Activated naive CD8-positive, alpha-beta T cell treated with anti-CD3 and anti-CD28 coated beads, Interleukin-2, amount 10 ng/mL, durations not matched to agents 7 days and 5 days (primary cell): ENCODE measurements at regions of chr1 and their contacts with region 1.

Region 1: DNA sequence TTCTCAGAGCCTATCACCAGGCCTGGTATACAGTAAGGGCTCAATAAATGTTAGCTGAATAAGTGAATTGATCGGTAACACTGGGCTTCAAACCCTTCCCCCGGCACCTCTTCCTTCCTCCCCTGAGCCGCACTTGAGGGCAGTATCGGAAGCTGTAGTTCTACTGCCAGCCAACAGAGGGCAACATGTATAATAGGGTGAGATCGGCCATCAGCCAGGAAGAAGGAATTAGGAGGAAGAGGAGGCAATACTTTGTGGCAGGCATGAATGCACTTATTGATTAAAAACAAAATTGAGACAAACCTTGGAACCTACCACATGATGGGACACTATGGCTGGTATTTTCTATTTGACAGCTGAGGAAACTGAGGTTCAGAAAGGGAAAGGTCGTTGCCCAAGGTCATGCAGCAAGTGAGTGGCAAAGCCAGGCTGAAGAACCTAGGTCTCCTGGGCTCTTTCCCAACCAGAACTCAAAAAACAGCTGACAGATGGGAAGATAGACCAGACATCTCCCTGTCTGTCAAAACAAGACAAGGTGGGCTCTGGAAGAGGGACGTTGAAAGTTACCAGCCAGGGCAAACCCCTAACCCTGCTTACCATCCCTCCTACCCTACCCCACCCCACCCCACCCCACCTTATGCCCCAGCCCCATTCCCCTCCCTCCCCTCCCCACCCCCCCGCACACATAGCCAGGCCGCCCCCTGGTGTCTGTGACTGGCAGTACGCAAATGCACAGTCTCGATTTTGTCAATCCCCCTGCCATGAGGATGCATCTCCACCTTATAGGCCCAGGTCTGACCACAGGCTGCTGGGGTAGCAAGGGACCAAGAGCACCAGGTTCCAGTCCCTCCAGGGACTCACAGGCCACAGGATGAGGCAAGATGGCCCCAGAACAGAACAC is 107.3 kb upstream of the RUNX3 start:
- DNase-seq: peak; percentile 78
- ATAC-seq: no peak
- H3K4me3 Mint-ChIP-seq: peak overlapping the region; percentile 22
- H3K27ac Mint-ChIP-seq: peak overlapping the region; percentile 57
- H3K4me1 Mint-ChIP-seq: peaks cover 48% of the 10 kb centered on the region
- H3K27me3 Mint-ChIP-seq: no peaks in the 10 kb centered on the region

Region 2: DNA sequence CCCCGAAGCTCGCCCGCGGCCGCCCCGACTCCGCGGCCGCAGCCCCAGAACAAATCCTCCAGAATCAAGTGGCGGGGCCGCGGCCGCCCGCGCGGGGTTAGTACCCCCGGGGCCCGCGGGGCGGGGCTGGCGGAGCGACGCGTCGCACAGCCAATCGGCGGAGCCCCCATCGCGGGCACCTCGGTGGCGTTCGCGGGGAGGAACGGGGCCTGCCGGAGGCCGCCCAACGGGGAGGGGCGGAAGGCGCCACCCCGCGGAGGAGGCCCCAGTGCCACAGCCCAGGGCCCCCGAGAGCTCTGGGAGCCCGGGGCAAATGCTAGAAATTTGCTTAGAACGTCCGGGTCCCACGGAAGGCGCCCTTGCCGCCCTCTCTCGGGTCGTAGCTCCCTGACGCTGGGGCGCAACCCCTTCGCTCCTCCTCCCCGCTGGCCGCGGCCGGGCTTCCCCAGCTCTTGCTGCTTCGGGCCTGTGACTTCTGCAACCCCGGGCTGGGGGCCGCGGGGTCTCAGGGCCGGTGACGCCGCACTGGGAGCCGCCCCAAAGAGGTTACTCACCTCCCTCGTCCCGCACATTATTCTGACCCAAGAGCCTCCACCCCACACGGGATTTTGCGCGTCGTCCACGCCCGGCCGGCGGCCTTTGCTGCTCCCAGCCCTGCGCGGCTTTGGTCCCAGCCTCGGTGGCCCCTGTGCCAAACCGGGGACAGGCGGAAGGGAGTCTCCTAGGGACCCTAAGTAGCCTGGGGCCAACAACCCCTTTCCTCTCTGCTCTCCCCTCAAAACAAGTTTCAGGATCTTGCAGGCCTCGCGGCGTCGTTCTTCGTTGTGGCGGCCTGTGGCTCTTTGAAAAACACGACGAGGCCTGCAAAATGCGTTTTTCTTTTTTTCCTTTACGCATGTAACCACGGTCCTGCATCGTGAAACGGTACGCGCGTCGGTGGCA is 106.9 kb before region 1 on chr1 and contains the start of gene RUNX3:
- POLR2A ChIA-PET with region 1: interaction called, 15 read pairs
- DNase-seq: peak; percentile 95
- ATAC-seq: peak; percentile 78
- H3K4me3 Mint-ChIP-seq: peak within 1 kb of the TSS; percentile 92
- H3K27ac Mint-ChIP-seq: peak within 1 kb of the TSS; percentile 91
- H3K4me1 Mint-ChIP-seq: peaks cover 60% of the 10 kb centered on the region
- H3K27me3 Mint-ChIP-seq: no peaks in the 10 kb centered on the region
- total RNA-seq, gene RUNX3: 172 TPM

Region 3: DNA sequence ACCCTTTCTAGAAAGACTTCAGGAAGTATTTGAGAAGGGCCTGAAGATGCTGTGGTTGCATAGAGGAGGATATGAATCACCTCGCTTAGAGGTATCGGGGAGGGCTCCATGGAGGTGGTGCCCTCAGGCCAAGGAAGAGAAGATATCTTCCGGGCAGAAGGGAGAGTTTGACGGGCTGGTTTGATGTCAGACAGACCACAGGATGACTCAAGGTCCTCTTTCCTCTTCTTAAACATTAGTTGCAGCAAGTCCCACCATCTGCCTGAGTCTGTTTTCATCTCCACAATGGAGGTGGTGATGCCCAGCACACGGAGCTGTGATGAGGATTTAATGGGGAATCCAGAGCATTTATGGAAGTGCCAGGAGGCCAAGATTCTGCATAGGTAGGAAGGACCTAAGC is 82.3 kb before region 1 on chr1:
- POLR2A ChIA-PET with region 1: interaction called, 154 read pairs
- DNase-seq: no peak
- ATAC-seq: peak; percentile 82
- H3K4me3 Mint-ChIP-seq: peak overlapping the region; percentile 87
- H3K27ac Mint-ChIP-seq: peak overlapping the region; percentile 96
- H3K4me1 Mint-ChIP-seq: peaks cover 84% of the 10 kb centered on the region
- H3K27me3 Mint-ChIP-seq: no peaks in the 10 kb centered on the region

Region 4: DNA sequence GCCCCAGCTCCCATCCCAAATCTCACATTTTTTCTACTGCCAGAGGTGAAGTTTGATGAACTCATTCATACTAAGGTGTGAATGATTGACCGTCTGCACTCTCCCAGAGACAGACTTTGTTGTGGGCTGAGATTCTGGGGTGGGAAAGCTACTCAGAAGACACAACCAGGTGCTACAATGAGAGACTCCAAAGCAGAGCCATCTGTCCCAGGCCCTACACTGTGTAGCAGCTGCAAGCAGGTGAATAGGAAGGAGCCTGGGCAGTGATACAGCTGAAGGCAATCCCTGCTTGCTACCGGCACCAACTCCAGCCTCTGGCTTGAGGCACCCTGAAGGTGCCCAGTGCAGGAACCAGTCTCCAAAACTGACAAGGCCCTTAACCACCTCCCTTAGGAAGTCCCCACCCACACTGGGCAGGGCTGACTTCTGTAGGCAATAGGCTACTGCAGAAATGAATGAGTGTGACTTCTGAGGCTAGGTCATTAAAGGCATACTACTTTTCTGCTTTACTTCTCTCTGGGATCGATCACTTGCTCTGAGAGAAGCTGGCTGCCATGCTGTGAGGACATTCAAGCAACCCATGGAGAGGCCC is 27.7 kb before region 1 on chr1:
- POLR2A ChIA-PET with region 1: no interaction called
- DNase-seq: no peak
- ATAC-seq: peak; percentile 81
- H3K4me3 Mint-ChIP-seq: peak overlapping the region; percentile 26
- H3K27ac Mint-ChIP-seq: peak overlapping the region; percentile 74
- H3K4me1 Mint-ChIP-seq: peaks cover 61% of the 10 kb centered on the region
- H3K27me3 Mint-ChIP-seq: no peaks in the 10 kb centered on the region

Region 5: GRCh38 chr1:25099343-25099951 is 62.0 kb after region 1 on chr1:
- POLR2A ChIA-PET with region 1: interaction called, 11 read pairs
- DNase-seq: peak; percentile 67
- ATAC-seq: peak; percentile 57
- H3K4me3 Mint-ChIP-seq: peak overlapping the region; percentile 73
- H3K27ac Mint-ChIP-seq: peak overlapping the region; percentile 87
- H3K4me1 Mint-ChIP-seq: peaks cover 76% of the 10 kb centered on the region
- H3K27me3 Mint-ChIP-seq: no peaks in the 10 kb centered on the region